ENCODE measurements at regions of chr11 and their contacts with region 1.

Region 1: DNA sequence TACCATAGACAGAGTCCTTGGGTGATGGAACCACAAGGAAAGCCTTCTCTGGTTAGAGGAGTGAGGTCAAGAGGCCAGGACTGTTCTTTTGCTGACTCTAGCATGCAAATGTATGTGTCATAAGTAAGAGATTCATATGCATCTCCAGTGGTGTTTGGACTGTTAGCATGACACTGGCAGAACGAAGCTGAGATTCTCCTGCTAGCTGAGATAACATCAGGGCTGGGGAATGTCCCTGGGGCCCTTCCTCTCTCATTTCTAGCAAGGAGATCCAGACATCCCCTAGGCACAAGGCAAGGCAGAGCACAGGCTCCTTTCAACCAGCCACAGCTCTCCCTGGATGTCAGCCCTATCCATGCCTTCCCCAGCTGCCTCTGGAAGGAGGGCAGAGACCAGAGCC is 711.3 kb downstream of the OPCML start:
- DNase-seq: no peak

Region 2: DNA sequence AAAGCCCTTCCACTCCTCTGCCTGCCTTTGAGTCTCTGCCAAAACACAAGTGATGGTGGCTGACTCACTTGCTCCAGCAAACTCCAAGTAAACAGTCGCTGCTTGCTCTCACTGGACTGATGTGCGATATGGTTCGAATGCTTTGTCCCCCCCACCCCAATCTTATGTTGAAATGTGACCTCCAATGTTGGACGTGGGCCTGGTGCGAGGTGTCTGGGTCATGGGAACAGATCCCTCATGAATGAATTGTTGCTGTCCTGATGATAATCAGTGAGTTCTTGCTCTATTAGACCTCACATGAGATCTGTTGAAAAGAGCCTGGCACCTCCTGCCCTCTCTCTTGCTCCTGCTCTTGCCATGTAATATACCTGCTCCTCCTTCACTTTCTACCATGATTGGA is 36.6 kb before region 1 on chr11:
- intact Hi-C with region 1: no loop called
- DNase-seq: no peak

Region 3: DNA sequence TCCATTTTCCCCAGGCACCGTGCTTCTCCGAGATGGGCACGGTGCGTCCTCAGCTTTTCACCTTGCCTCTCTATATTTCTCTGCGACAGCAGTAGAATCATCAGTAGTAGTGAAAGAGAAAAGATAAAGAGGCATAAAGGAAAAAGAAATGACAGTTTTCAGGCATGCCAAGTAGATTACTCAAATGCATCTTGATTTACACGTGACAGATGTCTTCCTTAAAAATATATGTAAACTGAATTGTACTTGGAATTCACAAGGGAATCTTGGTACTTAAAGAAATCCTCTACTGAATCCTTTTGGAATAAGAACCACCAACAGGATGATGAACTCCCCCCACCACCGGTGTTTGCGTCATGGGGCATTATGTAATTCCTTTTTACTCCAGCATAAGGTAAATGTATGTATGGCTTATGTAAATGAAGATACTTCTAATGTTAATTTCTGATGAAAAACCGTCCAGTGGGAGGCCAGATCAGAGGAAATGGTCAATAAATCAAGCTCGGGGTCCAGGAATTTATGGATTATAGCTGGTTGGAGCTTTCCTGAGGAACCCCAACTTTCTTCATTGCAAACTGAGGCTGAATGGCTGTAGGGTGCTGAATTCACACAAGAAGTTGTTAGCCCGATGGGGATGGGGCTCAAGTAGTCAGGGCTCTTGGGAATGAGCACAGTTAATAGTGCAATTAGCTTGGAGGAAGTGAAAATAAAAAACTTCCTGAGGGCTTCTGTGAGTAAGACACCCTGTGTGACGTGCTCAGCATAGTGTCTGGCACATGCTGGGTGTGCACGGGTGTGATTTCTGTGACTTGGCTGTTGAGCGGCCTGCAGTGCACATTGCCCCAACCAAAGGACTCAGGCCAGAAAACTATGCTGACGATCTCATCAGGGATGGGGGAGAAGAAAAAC is 80.9 kb after region 1 on chr11:
- intact Hi-C with region 1: loop called in 1 of 2 experiments (anchors 10 kb)
- DNase-seq: no peak

Measured in posterior vena cava (tissue), 2 donors.